Right ventricle myocardium inferior (tissue), 1 donor: ENCODE measurements at regions of chr15 and their contacts with region 1.

Region 1: GRCh38 chr15:60179786-60180391 is 175.8 kb downstream of the FOXB1 start:
- DNase-seq: no peak
- ATAC-seq: no peak

Region 2: GRCh38 chr15:60781211-60781713 is 601.4 kb after region 1 on chr15:
- intact Hi-C with region 1: no loop called
- DNase-seq: peak; percentile 69
- ATAC-seq: peak; percentile 79

Region 3: DNA sequence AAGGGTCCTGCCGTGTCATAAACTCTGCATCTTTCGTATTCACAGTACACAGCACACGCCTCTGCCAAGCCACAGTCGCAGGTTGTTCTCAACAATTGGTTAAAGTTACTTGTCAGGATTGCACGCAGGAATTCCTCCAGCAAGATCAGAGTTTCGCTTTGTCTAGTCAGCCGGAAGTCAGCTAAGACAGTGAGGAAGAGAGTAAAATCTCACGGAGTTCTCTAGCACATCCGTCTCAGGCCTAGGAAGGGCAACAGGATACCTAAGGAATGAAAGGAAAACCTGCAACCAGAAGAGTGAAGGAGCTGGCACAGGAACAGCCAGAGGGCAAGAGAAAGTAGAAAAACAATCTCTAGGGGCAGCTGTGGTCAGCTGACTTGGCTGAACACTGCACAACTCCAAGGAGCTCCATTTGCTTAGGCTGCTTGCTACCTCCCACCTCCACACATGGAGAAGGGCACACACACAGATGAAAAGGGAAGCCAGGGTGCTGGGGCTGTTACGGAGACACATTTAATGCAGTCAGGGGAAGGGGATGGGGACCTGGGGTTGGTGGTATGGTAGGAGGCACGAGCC is 1025.5 kb after region 1 on chr15:
- intact Hi-C with region 1: loop called (anchors 10 kb)
- DNase-seq: no peak
- ATAC-seq: no peak